A549 (cell line): ENCODE measurements at regions of chr19 and their contacts with region 1.

Region 1: DNA sequence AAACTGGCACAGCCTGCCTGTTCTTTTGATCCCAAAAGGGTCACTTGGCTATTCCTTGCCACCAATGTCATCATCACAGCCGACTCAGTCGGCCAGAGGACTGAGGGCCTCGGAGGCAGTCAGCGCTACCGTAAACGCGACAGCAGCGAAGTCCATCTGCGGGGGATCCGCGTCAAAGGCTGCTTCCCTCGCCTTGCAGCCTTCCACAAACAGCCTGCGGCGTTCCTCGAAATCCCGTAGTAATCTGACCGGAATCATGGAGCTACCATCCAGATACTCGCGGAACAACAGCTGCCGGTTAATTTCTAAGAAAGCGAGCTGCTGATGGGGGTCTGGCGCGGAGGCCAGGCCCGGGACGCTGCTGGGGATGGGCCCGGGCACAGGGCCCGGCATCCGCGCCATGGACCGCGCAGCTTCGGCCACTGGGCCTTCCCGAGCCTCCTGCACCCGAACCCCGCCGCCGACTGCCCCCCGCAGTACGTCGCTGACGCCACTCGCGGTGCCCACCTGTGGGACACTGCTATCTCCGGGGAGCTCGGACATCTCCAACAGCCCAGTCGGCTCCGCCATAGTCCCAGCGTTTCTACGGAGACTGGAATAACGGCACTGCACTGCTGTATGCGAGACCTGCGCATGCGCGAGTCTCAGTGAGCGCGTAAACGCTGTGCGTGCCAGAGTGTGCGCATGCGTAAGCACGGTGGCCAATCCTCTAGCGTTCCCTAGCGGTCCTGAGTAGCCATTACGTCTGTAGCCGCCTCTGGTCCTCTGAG is at the start of gene EID2B:
- DNase-seq: peak; percentile 99 to 100
- ATAC-seq: peak; percentile 95 to 96
- H3K4me3 ChIP-seq: peak within 1 kb of the TSS; percentile 68
- H3K27ac ChIP-seq: peak within 1 kb of the TSS; percentile 83 to 88
- H3K4me1 ChIP-seq: peaks cover 14% of the 10 kb centered on the region
- CTCF ChIP-seq: peak; percentile 100
- EP300 ChIP-seq: no peak
- POLR2A ChIP-seq: peak; percentile 96
- RAD21 ChIP-seq: peak; percentile 100
- polyA plus RNA-seq, gene EID2B: 9.4 and 10.9 TPM in 2 replicates

Region 2: GRCh38 chr19:39412100-39412866 is 120.1 kb before region 1 on chr19 and contains the start of gene PLEKHG2:
- CTCF ChIA-PET with region 1: interaction called, 50 read pairs
- POLR2A ChIA-PET with region 1: interaction called, 3 read pairs
- DNase-seq: peak; percentile 100
- ATAC-seq: peak; percentile 40 to 66
- H3K4me3 ChIP-seq: peak within 1 kb of the TSS; percentile 76
- H3K27ac ChIP-seq: peak within 1 kb of the TSS; percentile 94 to 99
- H3K4me1 ChIP-seq: peaks cover 43% of the 10 kb centered on the region
- CTCF ChIP-seq: peak; percentile 99
- EP300 ChIP-seq: peak in 1 of 2 experiments; percentile 61; a peak in 1 of 5 replicates
- POLR2A ChIP-seq: peak; percentile 64
- RAD21 ChIP-seq: peak; percentile 55 to 82
- polyA plus RNA-seq, gene PLEKHG2: 21.6 and 35.1 TPM in 2 replicates

Region 3: GRCh38 chr19:39445265-39446111 is 86.9 kb before region 1 on chr19 and contains the start of gene SUPT5H:
- CTCF ChIA-PET with region 1: interaction called, 279 read pairs
- POLR2A ChIA-PET with region 1: interaction called, 18 read pairs
- DNase-seq: peak; percentile 100
- ATAC-seq: peak; percentile 94 to 97
- H3K4me3 ChIP-seq: peak within 1 kb of the TSS; percentile 80
- H3K27ac ChIP-seq: peak within 1 kb of the TSS; percentile 86 to 90
- H3K4me1 ChIP-seq: peaks cover 28% of the 10 kb centered on the region
- CTCF ChIP-seq: no peak
- EP300 ChIP-seq: no peak
- POLR2A ChIP-seq: peak; percentile 94
- RAD21 ChIP-seq: no peak
- polyA plus RNA-seq, gene SUPT5H: 133 and 186 TPM in 2 replicates

Region 4: DNA sequence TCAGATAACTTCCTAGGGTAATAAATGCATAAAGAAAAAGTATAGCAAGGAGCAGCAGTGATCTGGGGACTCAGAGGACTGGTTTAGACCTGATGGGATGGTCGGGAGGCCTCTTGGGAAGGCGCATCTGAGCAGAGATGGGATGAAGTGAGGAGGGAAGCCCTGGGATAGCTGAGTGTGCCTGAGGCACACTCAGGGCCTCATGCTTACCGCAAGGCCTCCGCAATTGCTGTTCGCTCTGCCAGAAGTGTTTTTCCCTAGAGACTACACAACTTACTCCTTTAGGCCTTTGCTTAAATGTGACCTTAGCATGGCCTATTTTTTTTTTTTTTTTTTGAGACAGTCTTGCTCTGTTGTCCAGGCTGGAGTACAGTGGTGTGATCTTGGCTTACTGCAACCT is 37.8 kb before region 1 on chr19:
- CTCF ChIA-PET with region 1: interaction called, 259 read pairs
- POLR2A ChIA-PET with region 1: no interaction called
- DNase-seq: no peak
- ATAC-seq: no peak
- H3K4me3 ChIP-seq: no peak overlapping the region
- H3K27ac ChIP-seq: no peak overlapping the region
- H3K4me1 ChIP-seq: peaks cover 21% of the 10 kb centered on the region
- CTCF ChIP-seq: no peak
- EP300 ChIP-seq: no peak
- POLR2A ChIP-seq: no peak
- RAD21 ChIP-seq: no peak

Region 5: GRCh38 chr19:39557441-39558151 is 25.2 kb after region 1 on chr19:
- CTCF ChIA-PET with region 1: interaction called, 17 read pairs
- POLR2A ChIA-PET with region 1: no interaction called
- DNase-seq: no peak
- ATAC-seq: peak in 1 of 2 experiments; percentile 52; a peak in 3 of 6 replicates
- H3K4me3 ChIP-seq: no peak overlapping the region
- H3K27ac ChIP-seq: no peak overlapping the region
- H3K4me1 ChIP-seq: no peaks in the 10 kb centered on the region
- CTCF ChIP-seq: no peak
- EP300 ChIP-seq: no peak
- POLR2A ChIP-seq: no peak
- RAD21 ChIP-seq: no peak